OCI-LY7 (cell line): ENCODE measurements at regions of chr4 and their contacts with region 1.

Region 1: GRCh38 chr4:146059865-146060264 is 115.7 kb upstream of the LSM6 start:
- DNase-seq: peak; percentile 94
- H3K4me3 ChIP-seq: peak overlapping the region; percentile 60
- H3K27ac ChIP-seq: peak overlapping the region; percentile 96
- H3K4me1 ChIP-seq: peaks cover 96% of the 10 kb centered on the region
- CTCF ChIP-seq: no peak

Region 2: DNA sequence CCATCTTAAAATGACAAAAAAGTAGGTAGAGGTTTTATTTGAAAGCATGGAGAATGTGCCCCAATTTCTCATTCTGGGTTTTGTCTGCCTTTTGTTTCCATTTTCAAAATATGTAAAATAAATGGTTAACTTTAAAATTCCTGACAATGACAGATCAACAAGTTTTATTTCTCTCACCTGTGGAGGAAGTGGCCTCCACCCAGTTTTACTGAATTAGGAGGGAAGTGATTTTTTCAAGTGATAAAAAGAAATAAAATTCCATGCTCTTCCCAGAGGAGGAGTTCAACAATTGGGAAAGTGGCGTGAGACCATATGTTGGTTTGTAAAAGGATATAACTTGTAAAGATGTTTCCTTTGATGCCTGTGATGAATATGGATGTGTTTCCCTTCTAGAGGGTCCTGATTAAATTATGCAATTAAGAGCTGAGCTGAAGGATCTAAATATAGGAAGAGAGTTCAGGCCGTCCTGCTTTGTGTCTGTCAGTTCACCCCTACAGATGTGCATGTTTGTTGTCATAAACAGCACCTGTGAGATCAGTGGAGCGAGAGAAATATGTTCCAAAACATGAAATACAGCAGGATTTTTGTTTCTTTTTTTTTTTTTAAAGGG is 558.7 kb before region 1 on chr4:
- CTCF ChIA-PET with region 1: no interaction called
- POLR2A ChIA-PET with region 1: no interaction called
- intact Hi-C with region 1: loop called (anchors 10 kb)
- DNase-seq: peak; percentile 96
- H3K4me3 ChIP-seq: peak overlapping the region; percentile 51
- H3K27ac ChIP-seq: peak overlapping the region; percentile 99
- H3K4me1 ChIP-seq: peaks cover 100% of the 10 kb centered on the region
- CTCF ChIP-seq: 0 out of 2 replicates have a peak, but pooled peaks have one; percentile 3

Region 3: DNA sequence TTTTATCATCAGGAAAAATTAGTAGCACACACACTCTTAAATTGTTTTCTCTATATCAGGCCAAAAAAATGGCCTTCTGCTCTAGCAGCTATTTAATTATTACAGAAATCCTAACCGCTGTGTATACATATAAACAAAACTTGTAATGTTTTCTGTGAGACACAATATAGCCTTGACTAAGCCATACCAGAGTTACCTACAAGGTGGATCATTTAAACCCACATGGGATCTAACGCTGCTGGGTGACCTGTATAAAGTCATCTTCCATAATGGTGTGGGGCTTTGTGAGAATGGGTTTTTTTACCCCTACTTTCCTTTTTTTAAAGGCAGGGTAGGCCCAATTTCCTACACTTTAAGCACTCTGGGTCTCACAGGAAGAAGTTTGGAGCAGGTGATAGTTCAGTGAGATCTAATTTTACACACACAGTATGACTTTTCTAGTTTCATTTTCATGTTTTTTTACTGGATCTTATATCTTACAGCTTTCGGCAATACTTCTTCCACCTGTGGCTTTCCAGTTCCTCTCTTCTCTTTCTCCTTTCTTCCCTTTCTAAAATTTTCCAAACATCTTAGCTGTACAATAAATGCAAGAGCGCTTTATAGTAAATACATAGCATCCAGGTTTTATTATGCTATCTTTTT is 507.6 kb before region 1 on chr4:
- CTCF ChIA-PET with region 1: no interaction called
- POLR2A ChIA-PET with region 1: no interaction called
- intact Hi-C with region 1: no loop called
- DNase-seq: peak; percentile 58
- H3K4me3 ChIP-seq: peak overlapping the region; percentile 45
- H3K27ac ChIP-seq: peak overlapping the region; percentile 71
- H3K4me1 ChIP-seq: peaks cover 36% of the 10 kb centered on the region
- CTCF ChIP-seq: no peak

Region 4: GRCh38 chr4:146029939-146030710 is 29.7 kb before region 1 on chr4:
- CTCF ChIA-PET with region 1: no interaction called
- POLR2A ChIA-PET with region 1: interaction called, 27 read pairs
- intact Hi-C with region 1: no loop called
- DNase-seq: peak; percentile 75
- H3K4me3 ChIP-seq: peak overlapping the region; percentile 41
- H3K27ac ChIP-seq: peak overlapping the region; percentile 48
- H3K4me1 ChIP-seq: peaks cover 53% of the 10 kb centered on the region
- CTCF ChIP-seq: no peak

Region 5: DNA sequence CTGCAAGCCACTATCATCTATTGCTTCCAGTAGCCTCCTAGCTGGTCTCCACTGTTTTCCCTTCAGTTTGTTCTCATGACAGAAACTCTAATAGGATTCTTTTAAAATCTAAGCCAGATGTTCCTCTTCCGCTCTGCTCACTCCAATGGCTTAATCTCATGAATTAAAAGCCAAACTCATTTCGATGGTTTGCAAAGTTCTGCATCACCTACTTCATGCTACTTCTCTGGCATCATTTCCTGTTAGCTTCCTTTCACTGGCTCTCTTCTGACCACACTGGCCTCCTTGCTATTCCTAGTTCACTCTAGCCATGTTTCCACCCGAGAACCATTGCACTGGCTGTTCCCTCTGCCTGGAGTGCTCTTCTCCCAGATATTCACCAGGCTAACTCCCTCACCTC is 13.7 kb after region 1 on chr4:
- CTCF ChIA-PET with region 1: interaction called, 4 read pairs
- POLR2A ChIA-PET with region 1: interaction called, 96 read pairs
- intact Hi-C with region 1: no loop called
- DNase-seq: no peak
- H3K4me3 ChIP-seq: no peak overlapping the region
- H3K27ac ChIP-seq: no peak overlapping the region
- H3K4me1 ChIP-seq: peaks cover 11% of the 10 kb centered on the region
- CTCF ChIP-seq: no peak

Region 6: GRCh38 chr4:146175541-146176453 is 115.9 kb after region 1 on chr4 and contains the start of gene LSM6:
- CTCF ChIA-PET with region 1: no interaction called
- POLR2A ChIA-PET with region 1: interaction called, 3 read pairs
- intact Hi-C with region 1: loop called (anchors 2 kb)
- DNase-seq: peak; percentile 86
- H3K4me3 ChIP-seq: peak within 1 kb of the TSS; percentile 92
- H3K27ac ChIP-seq: peak within 1 kb of the TSS; percentile 56
- H3K4me1 ChIP-seq: peaks cover 46% of the 10 kb centered on the region
- CTCF ChIP-seq: 0 out of 2 replicates have a peak, but pooled peaks have one; percentile 28
- total RNA-seq, gene LSM6: 123 and 132 TPM in 2 replicates

Region 7: GRCh38 chr4:146302822-146303221 is 243.0 kb after region 1 on chr4:
- CTCF ChIA-PET with region 1: no interaction called
- POLR2A ChIA-PET with region 1: no interaction called
- intact Hi-C with region 1: no loop called
- DNase-seq: no peak
- H3K4me3 ChIP-seq: no peak overlapping the region
- H3K27ac ChIP-seq: no peak overlapping the region
- H3K4me1 ChIP-seq: no peaks in the 10 kb centered on the region
- CTCF ChIP-seq: no peak